Posterior vena cava (tissue), 2 donors: ENCODE measurements at regions of chr11 and their contacts with region 1.

Region 1: GRCh38 chr11:113562981-113563461 is 87.8 kb upstream of the DRD2 start:
- DNase-seq: no peak

Region 2: GRCh38 chr11:113341388-113342165 is 221.4 kb before region 1 on chr11:
- intact Hi-C with region 1: loop called in 1 of 2 experiments (anchors 5 kb)
- DNase-seq: no peak

Region 3: GRCh38 chr11:113356203-113356602 is 206.8 kb before region 1 on chr11:
- intact Hi-C with region 1: no loop called
- DNase-seq: no peak

Region 4: GRCh38 chr11:113447621-113448315 is 115.3 kb before region 1 on chr11:
- intact Hi-C with region 1: no loop called
- DNase-seq: peak; percentile 43

Region 5: DNA sequence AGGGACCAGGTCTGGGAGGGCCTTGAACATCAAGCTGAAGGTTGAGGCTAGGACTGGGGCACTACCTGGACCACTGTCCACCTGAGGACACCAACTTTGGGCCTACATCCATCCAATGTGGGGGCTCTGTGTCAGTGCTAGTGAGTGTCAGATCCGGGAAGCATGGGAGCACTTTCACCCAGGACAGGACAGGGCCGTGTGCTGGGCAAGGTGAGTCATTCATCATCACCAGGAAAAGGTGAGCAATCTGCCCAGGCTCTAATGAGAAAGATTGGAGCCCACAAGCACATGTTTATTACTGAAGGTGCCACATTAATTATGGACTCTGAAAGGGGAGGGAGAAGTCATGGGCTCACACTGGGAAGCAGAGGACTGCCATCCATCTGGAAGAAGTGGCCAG is 48.2 kb before region 1 on chr11:
- intact Hi-C with region 1: no loop called
- DNase-seq: no peak